ENCODE measurements at regions of chr12 and their contacts with region 1.

Region 1: DNA sequence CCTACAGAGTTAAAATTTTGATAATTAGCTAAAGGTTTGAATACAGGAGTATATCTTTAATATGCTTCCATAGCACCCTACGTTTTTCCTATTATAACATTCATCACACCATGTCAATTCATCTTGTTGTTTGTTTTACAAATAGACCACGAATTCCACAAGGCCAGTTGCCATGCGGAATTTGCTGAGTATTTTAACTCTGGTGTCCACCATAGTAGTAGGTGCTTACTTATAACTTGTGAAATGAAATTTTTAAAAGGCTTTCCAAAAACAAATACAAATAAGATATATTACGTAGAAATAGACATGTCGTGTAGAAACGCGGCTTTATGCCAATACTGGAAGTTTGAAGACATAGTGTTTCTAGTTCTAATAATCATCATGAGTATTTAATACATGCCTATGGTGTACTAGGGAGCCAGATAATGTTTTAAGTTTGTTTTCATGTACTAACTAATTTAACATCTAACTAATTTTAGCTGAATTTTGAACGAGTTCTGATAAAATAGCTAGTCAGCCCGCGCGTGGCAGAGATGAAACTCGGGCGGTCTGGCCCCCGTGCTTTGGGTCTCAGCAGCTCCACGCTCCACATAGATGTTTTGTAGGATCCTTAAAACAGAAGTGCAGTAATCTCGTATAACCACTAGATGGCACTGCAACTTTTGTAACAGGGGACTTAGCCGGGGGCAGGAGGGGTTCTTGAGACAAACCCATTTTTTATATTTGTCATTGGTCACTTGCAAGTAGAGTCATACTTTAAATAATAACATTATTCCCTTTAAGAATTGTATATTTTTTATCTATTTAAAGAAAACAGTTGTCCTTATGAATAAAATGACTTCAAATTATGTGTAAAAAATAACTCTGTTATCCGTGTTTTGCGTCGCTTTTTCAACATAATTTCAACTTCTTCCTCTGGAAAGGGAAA is 10.2 kb downstream of the CD69 start:
- DNase-seq: peak; percentile 44 to 84
- H3K4me3 ChIP-seq: no peak overlapping the region
- CTCF ChIP-seq: peak in 1 of 3 donors; percentile 21
- POLR2A ChIP-seq: no peak

Region 2: GRCh38 chr12:9792961-9793617 is 42.5 kb after region 1 on chr12:
- intact Hi-C with region 1: loop called (anchors 5 kb)
- DNase-seq: no peak
- H3K4me3 ChIP-seq: no peak overlapping the region
- CTCF ChIP-seq: no peak
- POLR2A ChIP-seq: no peak

Region 3: GRCh38 chr12:9851927-9852326 is 101.4 kb after region 1 on chr12:
- intact Hi-C with region 1: no loop called
- DNase-seq: no peak
- H3K4me3 ChIP-seq: no peak overlapping the region
- CTCF ChIP-seq: no peak
- POLR2A ChIP-seq: no peak

Region 4: GRCh38 chr12:9940375-9940774 is 189.8 kb after region 1 on chr12:
- intact Hi-C with region 1: no loop called
- DNase-seq: no peak
- H3K4me3 ChIP-seq: no peak overlapping the region
- CTCF ChIP-seq: no peak
- POLR2A ChIP-seq: no peak

Region 5: DNA sequence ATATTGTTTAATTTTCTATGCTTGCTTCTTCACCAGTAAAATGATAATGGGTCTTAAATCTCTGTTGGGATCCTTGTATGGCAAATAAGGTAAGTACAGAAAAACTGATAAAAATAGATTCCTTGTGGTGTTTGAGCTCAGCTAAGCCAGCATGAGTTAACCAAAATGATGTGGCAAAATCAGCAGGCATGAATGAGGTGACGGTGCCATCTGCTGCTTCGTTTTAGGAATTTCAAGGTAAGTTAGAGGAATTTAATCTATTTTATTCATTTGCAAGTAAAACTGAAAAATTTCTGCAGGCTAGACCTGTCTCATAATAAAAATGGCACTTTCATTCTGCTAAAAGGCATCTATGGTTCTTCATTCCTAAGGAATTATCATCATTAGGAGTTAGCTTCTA is 389.5 kb after region 1 on chr12:
- intact Hi-C with region 1: loop called (anchors 10 kb)
- DNase-seq: no peak
- H3K4me3 ChIP-seq: no peak overlapping the region
- CTCF ChIP-seq: peak in 1 of 3 donors; percentile 21
- POLR2A ChIP-seq: no peak